ENCODE measurements at regions of chr11 and their contacts with region 1.

Region 1: DNA sequence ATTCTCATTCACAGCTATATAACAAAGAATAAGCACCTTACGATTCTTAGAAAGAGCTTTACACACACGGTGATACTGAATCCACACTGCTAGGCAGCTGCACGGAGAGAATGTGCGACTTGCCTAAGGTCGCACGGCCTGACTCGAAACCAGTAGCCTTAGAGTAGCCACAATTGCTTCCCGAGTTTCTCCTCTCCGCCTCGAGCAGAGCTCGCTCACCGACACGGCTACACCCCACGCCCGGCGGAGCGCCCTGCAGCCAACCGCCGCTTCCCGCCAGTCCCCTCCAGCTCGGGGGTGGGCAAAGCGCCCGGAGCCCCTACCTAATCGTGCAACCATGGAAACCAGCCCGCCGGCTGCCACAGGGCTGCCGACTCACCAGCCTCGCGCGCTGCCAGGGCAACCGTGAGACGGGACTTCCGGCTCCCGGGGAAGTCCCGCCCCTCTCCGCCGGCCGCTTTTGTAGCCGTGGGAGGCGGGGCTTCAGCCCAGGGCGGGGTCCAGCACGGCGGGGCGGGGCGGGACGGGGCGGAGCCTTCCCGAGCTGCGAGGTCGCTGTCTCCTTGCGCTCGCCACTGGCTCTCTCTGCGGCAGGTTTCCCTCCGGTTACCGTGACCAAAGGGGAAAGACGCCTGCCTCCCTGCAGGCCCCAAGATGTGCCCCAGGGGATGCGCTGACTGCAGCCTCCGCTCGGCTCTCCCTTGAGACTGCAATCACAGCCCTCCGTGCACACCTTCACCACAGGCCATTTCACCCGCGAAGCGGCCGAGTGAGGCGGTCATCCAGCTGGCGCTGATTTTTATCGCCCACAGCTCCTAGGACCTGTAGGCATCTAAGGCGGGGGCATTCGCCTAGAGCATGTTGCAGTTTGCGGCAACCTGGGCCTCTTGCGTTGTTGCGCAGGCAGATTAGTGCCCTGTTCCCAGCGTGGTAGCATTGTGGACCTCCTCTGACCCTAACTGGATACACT is 1.1 kb downstream of the BSCL2 start:
- DNase-seq: peak; percentile 95
- H3K4me3 ChIP-seq: peak overlapping the region; percentile 65 to 68
- H3K27ac ChIP-seq: peak overlapping the region; percentile 77 to 81
- H3K4me1 ChIP-seq: peaks cover 14% of the 10 kb centered on the region
- H3K27me3 ChIP-seq: no peaks in the 10 kb centered on the region
- CTCF ChIP-seq: no peak
- POLR2A ChIP-seq: peak; percentile 60

Region 2: DNA sequence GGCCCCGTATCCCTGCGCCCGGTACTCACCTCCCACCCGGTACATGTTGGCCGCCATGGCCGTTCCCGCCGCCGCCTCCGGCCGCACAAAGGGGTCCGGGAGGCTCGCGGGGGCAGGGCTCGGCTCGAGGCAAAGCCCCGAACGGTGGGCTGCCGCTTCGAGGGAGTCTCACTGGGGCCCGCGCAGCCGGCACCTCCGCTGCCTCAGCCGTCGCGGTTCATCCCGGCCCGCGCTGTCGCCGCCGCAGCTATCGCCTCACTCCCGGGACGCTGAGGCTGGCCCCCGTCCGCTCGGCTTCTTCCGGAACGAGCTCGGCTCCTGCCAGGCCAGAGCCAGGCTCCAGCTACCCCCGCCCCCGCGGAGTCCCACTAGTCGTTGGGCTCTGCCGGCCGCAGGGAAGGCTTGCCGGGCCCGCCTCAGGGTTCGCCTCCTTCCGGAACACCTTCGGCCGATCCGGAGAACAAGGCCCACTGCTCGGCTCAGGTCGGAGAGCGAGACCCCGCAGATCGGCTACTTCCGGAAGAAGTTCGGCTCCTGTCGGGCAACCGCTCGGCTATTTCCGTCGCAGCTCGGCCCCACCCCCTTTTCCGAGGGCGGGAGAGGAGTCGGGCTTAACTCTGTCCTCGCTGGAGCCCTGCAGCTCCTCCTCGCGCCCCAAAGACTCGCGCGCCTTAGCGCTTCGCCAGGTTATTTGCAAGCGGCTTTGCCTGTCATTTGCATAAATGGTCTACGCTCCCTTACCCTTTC is 104.6 kb before region 1 on chr11 and contains the start of gene MTA2:
- intact Hi-C with region 1: loop called (anchors 5 kb)
- DNase-seq: peak; percentile 97
- H3K4me3 ChIP-seq: peak within 1 kb of the TSS; percentile 64 to 89
- H3K27ac ChIP-seq: peak within 1 kb of the TSS; percentile 91 to 93
- H3K4me1 ChIP-seq: peaks cover 9% of the 10 kb centered on the region
- H3K27me3 ChIP-seq: no peaks in the 10 kb centered on the region
- CTCF ChIP-seq: peak in 1 of 4 experiments; percentile 11
- POLR2A ChIP-seq: peak; percentile 76
- total RNA-seq, gene MTA2: 96.5 to 110 TPM

Region 3: GRCh38 chr11:62645956-62646824 is 60.0 kb before region 1 on chr11 and contains the start of gene GANAB:
- intact Hi-C with region 1: no loop called
- DNase-seq: peak; percentile 100
- H3K4me3 ChIP-seq: peak within 1 kb of the TSS; percentile 73 to 98
- H3K27ac ChIP-seq: peak within 1 kb of the TSS; percentile 86 to 89
- H3K4me1 ChIP-seq: no peaks in the 10 kb centered on the region
- H3K27me3 ChIP-seq: no peaks in the 10 kb centered on the region
- CTCF ChIP-seq: no peak
- POLR2A ChIP-seq: peak; percentile 75
- total RNA-seq, gene GANAB: 163 to 199 TPM

Region 4: GRCh38 chr11:62671575-62672389 is 34.4 kb before region 1 on chr11 and contains the starts of genes LBHD1 and UQCC3:
- intact Hi-C with region 1: no loop called
- DNase-seq: peak; percentile 87
- H3K4me3 ChIP-seq: peak within 1 kb of the TSS; percentile 61 to 69
- H3K27ac ChIP-seq: peak within 1 kb of the TSS; percentile 82 to 87
- H3K4me1 ChIP-seq: peaks cover 14% of the 10 kb centered on the region
- H3K27me3 ChIP-seq: no peaks in the 10 kb centered on the region
- CTCF ChIP-seq: peak in 1 of 4 experiments; percentile 22
- POLR2A ChIP-seq: peak; percentile 49
- total RNA-seq, gene LBHD1: 7.1 to 10.2 TPM
- total RNA-seq, gene UQCC3: 10.3 to 18.3 TPM